ENCODE measurements at regions of chr12 and their contacts with region 1.

Region 1: DNA sequence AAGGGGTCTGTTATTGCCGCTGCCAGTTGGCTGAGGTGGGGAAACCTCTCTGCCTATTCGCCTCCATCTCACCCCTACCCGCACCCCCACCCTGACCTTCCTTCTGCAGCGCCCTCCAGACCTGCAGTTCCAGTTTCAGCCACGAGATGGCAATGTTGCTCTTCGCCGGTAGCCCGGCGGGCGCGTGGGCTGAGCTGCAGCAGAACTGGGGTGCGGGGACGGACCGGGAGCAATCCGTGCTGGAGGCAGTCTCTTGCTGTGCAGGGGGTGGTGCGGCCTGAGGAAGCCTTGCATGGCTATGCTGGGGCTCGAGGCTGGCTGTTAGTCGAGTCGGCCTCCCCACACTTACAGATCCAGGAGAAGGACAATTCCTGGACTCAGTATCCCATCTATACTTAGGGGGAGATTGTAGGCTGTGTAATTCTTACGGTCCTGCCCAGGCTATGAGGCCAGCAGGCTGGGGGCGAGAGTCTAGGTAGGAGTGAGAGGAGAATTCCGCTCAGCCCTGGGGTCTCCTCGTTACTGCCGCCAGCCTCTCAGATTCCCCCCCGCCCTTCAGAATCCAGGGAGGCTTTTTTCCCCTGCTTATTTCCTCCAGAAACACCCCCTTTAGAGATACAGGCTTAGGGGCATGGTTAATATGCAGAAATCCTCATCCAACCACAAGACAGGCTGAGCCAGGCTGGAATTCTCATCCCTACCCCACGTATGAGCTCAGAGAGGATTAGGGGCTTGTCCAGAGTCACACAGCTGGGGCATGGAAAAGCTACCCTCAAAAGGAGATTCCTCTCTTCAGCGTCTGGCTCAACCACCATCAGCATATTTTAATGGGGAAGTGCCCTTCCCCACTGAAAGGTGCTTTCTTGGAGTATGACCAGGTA is 118.2 kb downstream of the AACS start:
- DNase-seq: peak; percentile 85
- ATAC-seq: peak; percentile 81
- H3K4me3 Mint-ChIP-seq: no peak overlapping the region
- H3K27ac Mint-ChIP-seq: no peak overlapping the region
- H3K4me1 Mint-ChIP-seq: peaks cover 2% of the 10 kb centered on the region
- H3K27me3 Mint-ChIP-seq: peaks cover 43% of the 10 kb centered on the region
- CTCF ChIP-seq: peak; percentile 98

Region 2: GRCh38 chr12:125015680-125016310 is 167.6 kb before region 1 on chr12:
- CTCF ChIA-PET with region 1: no interaction called
- POLR2A ChIA-PET with region 1: no interaction called
- intact Hi-C with region 1: no loop called
- DNase-seq: no peak
- ATAC-seq: no peak
- H3K4me3 Mint-ChIP-seq: no peak overlapping the region
- H3K27ac Mint-ChIP-seq: no peak overlapping the region
- H3K4me1 Mint-ChIP-seq: no peaks in the 10 kb centered on the region
- H3K27me3 Mint-ChIP-seq: no peaks in the 10 kb centered on the region
- CTCF ChIP-seq: no peak

Region 3: GRCh38 chr12:125203145-125203765 is 19.8 kb after region 1 on chr12:
- CTCF ChIA-PET with region 1: interaction called, 13 read pairs
- POLR2A ChIA-PET with region 1: interaction called, 4 read pairs
- intact Hi-C with region 1: no loop called
- DNase-seq: no peak
- ATAC-seq: peak; percentile 27
- H3K4me3 Mint-ChIP-seq: no peak overlapping the region
- H3K27ac Mint-ChIP-seq: no peak overlapping the region
- H3K4me1 Mint-ChIP-seq: no peaks in the 10 kb centered on the region
- H3K27me3 Mint-ChIP-seq: peaks cover 18% of the 10 kb centered on the region
- CTCF ChIP-seq: peak; percentile 43

Region 4: GRCh38 chr12:125330645-125331341 is 147.4 kb after region 1 on chr12:
- CTCF ChIA-PET with region 1: interaction called, 15 read pairs
- POLR2A ChIA-PET with region 1: interaction called, 5 read pairs
- intact Hi-C with region 1: no loop called
- DNase-seq: peak; percentile 65
- ATAC-seq: peak; percentile 67
- H3K4me3 Mint-ChIP-seq: no peak overlapping the region
- H3K27ac Mint-ChIP-seq: no peak overlapping the region
- H3K4me1 Mint-ChIP-seq: no peaks in the 10 kb centered on the region
- H3K27me3 Mint-ChIP-seq: peaks cover 26% of the 10 kb centered on the region
- CTCF ChIP-seq: peak; percentile 85

Region 5: GRCh38 chr12:125402874-125403789 is 219.7 kb after region 1 on chr12:
- CTCF ChIA-PET with region 1: interaction called, 26 read pairs
- POLR2A ChIA-PET with region 1: no interaction called
- intact Hi-C with region 1: loop called (anchors 2 kb)
- DNase-seq: peak; percentile 6
- ATAC-seq: no peak
- H3K4me3 Mint-ChIP-seq: no peak overlapping the region
- H3K27ac Mint-ChIP-seq: no peak overlapping the region
- H3K4me1 Mint-ChIP-seq: no peaks in the 10 kb centered on the region
- H3K27me3 Mint-ChIP-seq: peaks cover 9% of the 10 kb centered on the region
- CTCF ChIP-seq: peak; percentile 71

Measured in activated CD8-positive, alpha-beta T cell treated with anti-CD3 and anti-CD28 coated beads for 36 hours (primary cell).